ENCODE measurements at regions of chr3 and their contacts with region 1.

Region 1: GRCh38 chr3:27914199-27914598 is 192.1 kb upstream of the EOMES start:
- DNase-seq: no peak
- H3K4me3 ChIP-seq: no peak overlapping the region
- H3K27me3 ChIP-seq: no peaks in the 10 kb centered on the region
- CTCF ChIP-seq: no peak

Region 2: DNA sequence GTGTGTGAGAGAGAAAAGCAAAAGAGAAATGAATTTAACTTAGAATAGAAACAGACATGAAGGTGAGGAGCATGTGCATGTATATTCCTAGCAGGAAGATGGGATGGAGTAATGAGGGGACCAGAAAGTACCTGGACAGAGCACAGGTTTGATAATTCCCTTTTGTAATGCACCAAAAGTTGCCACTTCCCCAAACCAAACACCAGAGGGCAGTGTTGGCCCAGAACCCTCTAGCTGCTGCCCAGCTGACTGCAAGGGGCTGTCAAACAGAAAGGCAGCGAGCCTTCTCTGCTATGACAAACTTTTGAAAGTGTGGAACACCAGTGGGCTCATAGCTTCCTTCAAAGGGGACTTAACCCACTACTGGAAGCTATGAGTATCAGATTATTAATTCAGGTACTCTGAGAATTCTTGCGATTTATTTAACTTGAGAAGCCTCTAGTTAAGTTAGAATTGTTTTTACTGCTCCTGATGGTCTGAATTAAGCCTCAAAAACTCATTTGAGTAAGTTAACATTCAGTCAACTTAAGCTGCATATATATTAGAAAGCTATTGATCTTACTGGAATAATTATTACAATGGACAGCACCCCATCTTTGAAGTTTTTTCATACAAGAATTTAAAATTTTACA is 779.9 kb before region 1 on chr3:
- CTCF ChIA-PET with region 1: no interaction called
- POLR2A ChIA-PET with region 1: no interaction called
- DNase-seq: peak; percentile 11
- H3K4me3 ChIP-seq: no peak overlapping the region
- H3K27me3 ChIP-seq: no peaks in the 10 kb centered on the region
- CTCF ChIP-seq: peak; percentile 92

Region 3: GRCh38 chr3:27721717-27722542 is 192.3 kb before region 1 on chr3 and contains the start of gene EOMES:
- CTCF ChIA-PET with region 1: no interaction called
- POLR2A ChIA-PET with region 1: interaction called, 12 read pairs
- DNase-seq: no peak
- H3K4me3 ChIP-seq: no peak within 1 kb of the TSS
- H3K27me3 ChIP-seq: peaks cover 57% of the 10 kb centered on the region
- CTCF ChIP-seq: 0 out of 2 replicates have a peak, but pooled peaks have one; percentile 3
- polyA plus RNA-seq, gene EOMES: not detected in 2 replicates

Measured in BJ (cell line).